Endothelial cell of umbilical vein (primary cell): ENCODE measurements at regions of chr9 and their contacts with region 1.

Region 1: GRCh38 chr9:109903515-109904138 is 123.6 kb downstream of the PALM2AKAP2 start:
- DNase-seq: peak; percentile 82
- H3K4me3 ChIP-seq: no peak overlapping the region
- H3K27ac ChIP-seq: no peak overlapping the region
- H3K4me1 ChIP-seq: peaks cover 24% of the 10 kb centered on the region
- H3K27me3 ChIP-seq: peaks cover 8 to 9% of the 10 kb centered on the region in 2 experiments
- CTCF ChIP-seq: peak; percentile 62 to 82
- POLR2A ChIP-seq: no peak

Region 2: GRCh38 chr9:109745335-109746283 is 158.0 kb before region 1 on chr9:
- CTCF ChIA-PET with region 1: no interaction called
- POLR2A ChIA-PET with region 1: no interaction called
- dilution Hi-C with region 1: no loop called
- intact Hi-C with region 1: no loop called
- DNase-seq: no peak
- H3K4me3 ChIP-seq: no peak overlapping the region
- H3K27ac ChIP-seq: no peak overlapping the region
- H3K4me1 ChIP-seq: no peaks in the 10 kb centered on the region
- H3K27me3 ChIP-seq: peaks cover 0 to 6% of the 10 kb centered on the region in 2 experiments
- CTCF ChIP-seq: no peak
- POLR2A ChIP-seq: no peak

Region 3: GRCh38 chr9:109986521-109986991 is 82.9 kb after region 1 on chr9:
- CTCF ChIA-PET with region 1: interaction called, 6 read pairs
- POLR2A ChIA-PET with region 1: interaction called, 5 read pairs
- dilution Hi-C with region 1: no loop called
- intact Hi-C with region 1: loop called (anchors 1 kb)
- DNase-seq: peak; percentile 95
- H3K4me3 ChIP-seq: peak overlapping the region in 1 of 3 experiments; percentile 10
- H3K27ac ChIP-seq: peak overlapping the region; percentile 93
- H3K4me1 ChIP-seq: peaks cover 22% of the 10 kb centered on the region
- H3K27me3 ChIP-seq: no peaks in the 10 kb centered on the region
- CTCF ChIP-seq: no peak
- POLR2A ChIP-seq: no peak

Region 4: GRCh38 chr9:110048403-110048975 is 144.9 kb after region 1 on chr9:
- CTCF ChIA-PET with region 1: interaction called, 27 read pairs
- POLR2A ChIA-PET with region 1: interaction called, 7 read pairs
- dilution Hi-C with region 1: no loop called
- intact Hi-C with region 1: loop called (anchors 1 kb)
- DNase-seq: peak; percentile 88
- H3K4me3 ChIP-seq: peak overlapping the region; percentile 99 to 100 (median 100)
- H3K27ac ChIP-seq: peak overlapping the region; percentile 98
- H3K4me1 ChIP-seq: peaks cover 28% of the 10 kb centered on the region
- H3K27me3 ChIP-seq: no peaks in the 10 kb centered on the region
- CTCF ChIP-seq: no peak
- POLR2A ChIP-seq: peak; percentile 96

Region 5: DNA sequence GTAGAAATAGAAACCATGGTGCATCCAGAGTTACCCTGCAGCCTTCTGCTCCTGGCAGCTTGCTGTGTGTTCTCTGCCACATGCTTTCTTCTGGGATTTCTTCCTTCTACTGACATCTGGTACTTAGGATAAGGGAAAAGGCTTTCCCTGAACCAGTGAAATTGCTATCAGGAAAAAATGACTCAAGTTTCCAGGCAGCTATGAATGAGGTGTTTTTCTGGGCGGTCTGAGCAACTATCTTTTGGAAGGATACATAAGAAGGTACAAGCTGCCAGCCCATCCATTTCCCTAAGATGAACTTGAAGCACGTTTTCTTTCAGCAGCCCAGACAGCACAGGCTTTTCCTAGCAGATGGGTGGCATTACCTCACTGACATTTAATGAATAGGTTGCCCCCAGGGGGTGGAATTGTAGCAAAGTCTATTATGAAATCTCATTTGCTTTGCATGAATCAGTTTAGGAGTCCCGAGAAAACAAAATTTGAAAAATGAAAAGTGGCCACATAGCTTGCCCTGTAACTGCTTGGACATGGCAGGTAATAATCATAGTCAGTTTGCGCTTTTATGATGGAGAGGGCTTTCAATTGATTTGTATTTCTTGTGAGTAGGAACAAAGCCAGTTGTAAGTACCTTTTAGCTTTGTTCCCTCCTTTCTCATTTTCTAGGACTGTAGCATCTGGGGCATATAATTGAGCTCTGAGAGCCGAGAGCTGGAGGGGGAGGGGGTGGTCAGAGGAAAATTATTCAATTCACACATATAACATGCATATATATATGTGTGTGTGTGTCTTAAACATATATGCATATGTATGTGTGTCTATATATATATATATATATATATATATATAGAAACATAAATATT is 195.8 kb after region 1 on chr9:
- CTCF ChIA-PET with region 1: interaction called, 10 read pairs
- POLR2A ChIA-PET with region 1: no interaction called
- dilution Hi-C with region 1: no loop called
- intact Hi-C with region 1: no loop called
- DNase-seq: peak; percentile 80
- H3K4me3 ChIP-seq: no peak overlapping the region
- H3K27ac ChIP-seq: peak overlapping the region; percentile 7
- H3K4me1 ChIP-seq: peaks cover 17% of the 10 kb centered on the region
- H3K27me3 ChIP-seq: no peaks in the 10 kb centered on the region
- CTCF ChIP-seq: no peak
- POLR2A ChIP-seq: no peak

Region 6: DNA sequence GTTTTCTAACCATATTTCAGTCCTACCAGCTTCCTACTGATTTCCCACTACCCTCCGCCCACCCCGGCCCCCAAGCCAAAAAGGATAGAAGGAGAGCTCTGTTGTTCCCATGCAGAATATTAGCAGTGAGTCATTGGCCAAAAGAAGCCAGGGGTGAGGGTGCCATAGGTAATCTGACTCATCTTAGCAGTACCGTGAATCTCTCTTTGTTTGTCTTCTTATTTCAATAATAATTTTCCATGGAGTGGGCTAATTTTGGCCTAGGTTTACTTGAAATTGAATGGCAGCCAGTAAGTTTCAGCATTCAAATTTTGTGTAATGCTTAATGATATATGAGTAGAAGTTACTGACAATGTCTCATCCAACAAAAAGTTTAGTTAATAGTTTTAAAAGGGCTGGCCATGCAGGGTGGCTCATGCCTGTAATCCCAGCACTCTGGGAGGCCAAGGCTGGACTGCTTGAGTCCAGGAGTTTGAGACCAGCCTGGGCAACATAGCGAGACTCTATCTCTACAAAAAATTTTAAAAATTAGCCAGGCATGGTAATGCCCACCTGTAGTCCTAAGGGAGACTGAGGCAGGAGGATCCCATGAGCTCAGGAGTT is 230.1 kb after region 1 on chr9:
- CTCF ChIA-PET with region 1: interaction called, 11 read pairs
- POLR2A ChIA-PET with region 1: interaction called, 7 read pairs
- dilution Hi-C with region 1: no loop called
- intact Hi-C with region 1: no loop called
- DNase-seq: no peak
- H3K4me3 ChIP-seq: no peak overlapping the region
- H3K27ac ChIP-seq: peak overlapping the region; percentile 8
- H3K4me1 ChIP-seq: peaks cover 54% of the 10 kb centered on the region
- H3K27me3 ChIP-seq: no peaks in the 10 kb centered on the region
- CTCF ChIP-seq: no peak
- POLR2A ChIP-seq: no peak

Region 7: GRCh38 chr9:110161940-110162339 is 258.3 kb after region 1 on chr9:
- CTCF ChIA-PET with region 1: interaction called, 13 read pairs
- POLR2A ChIA-PET with region 1: no interaction called
- dilution Hi-C with region 1: loop called (anchors 25 kb)
- intact Hi-C with region 1: no loop called
- DNase-seq: no peak
- H3K4me3 ChIP-seq: no peak overlapping the region
- H3K27ac ChIP-seq: no peak overlapping the region
- H3K4me1 ChIP-seq: peaks cover 12% of the 10 kb centered on the region
- H3K27me3 ChIP-seq: no peaks in the 10 kb centered on the region
- CTCF ChIP-seq: no peak
- POLR2A ChIP-seq: no peak